Caco-2 (cell line): ENCODE measurements at regions of chr11 and their contacts with region 1.

Region 1: DNA sequence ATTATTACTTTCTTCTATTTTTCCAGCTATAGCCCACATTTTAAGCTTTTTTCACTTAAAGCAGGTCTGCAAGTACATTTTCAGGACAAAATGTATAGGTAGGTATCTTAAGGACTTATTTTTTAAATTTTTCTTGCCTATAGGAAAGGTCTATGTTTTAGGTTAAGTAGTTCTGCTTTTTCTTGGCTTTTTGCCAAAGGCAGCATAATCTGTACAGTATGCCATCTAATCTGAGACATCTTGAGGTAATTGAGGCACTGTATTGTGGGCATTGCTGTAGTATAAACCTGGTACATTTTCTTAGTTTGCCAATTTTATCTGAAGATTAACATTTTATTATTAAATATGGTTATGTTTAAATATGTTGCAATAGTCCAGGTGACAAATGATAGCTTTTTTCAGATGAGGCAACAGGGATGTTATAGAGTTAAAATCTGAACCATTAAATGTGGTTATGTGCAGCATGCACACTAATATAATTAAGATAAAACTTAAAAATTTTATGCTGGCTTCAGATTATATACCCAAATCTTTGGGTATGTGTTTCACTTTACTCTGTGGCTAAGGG is 42.9 kb downstream of the QSER1 start:
- DNase-seq: no peak
- H3K4me3 ChIP-seq: no peak overlapping the region
- H3K4me3 Mint-ChIP-seq: no peak overlapping the region
- H3K27ac Mint-ChIP-seq: no peak overlapping the region
- H3K4me1 ChIP-seq: peaks cover 32% of the 10 kb centered on the region
- H3K4me1 Mint-ChIP-seq: peaks cover 26% of the 10 kb centered on the region
- H3K27me3 ChIP-seq: no peaks in the 10 kb centered on the region
- H3K27me3 Mint-ChIP-seq: no peaks in the 10 kb centered on the region
- CTCF ChIP-seq: no peak

Region 2: GRCh38 chr11:32918427-32918826 is 17.1 kb before region 1 on chr11:
- CTCF ChIA-PET with region 1: no interaction called
- POLR2A ChIA-PET with region 1: no interaction called
- intact Hi-C with region 1: loop called (anchors 2 kb)
- DNase-seq: no peak
- H3K4me3 ChIP-seq: no peak overlapping the region
- H3K4me3 Mint-ChIP-seq: peak overlapping the region; percentile 33
- H3K27ac Mint-ChIP-seq: peak overlapping the region; percentile 78
- H3K4me1 ChIP-seq: peaks cover 34% of the 10 kb centered on the region
- H3K4me1 Mint-ChIP-seq: peaks cover 29% of the 10 kb centered on the region
- H3K27me3 ChIP-seq: no peaks in the 10 kb centered on the region
- H3K27me3 Mint-ChIP-seq: no peaks in the 10 kb centered on the region
- CTCF ChIP-seq: no peak

Region 3: DNA sequence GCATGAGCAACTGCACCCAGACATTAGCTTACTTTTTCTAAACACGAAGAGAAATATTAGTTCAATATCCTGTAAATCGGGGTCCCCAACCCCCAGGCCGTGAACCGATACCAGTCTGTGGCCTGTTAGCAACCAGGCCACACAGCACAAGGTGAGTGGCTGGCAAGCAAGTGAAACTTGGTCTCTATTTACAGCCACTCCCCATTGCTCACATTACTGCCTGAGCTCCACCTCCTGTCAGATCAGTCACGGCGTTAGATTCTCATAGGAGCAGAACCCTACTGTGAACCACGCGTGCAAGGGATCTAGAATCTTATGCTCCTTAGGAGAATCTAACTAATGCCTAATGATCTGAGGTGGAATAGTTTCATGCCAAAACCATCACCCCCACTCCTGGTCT is 52.3 kb after region 1 on chr11:
- CTCF ChIA-PET with region 1: no interaction called
- POLR2A ChIA-PET with region 1: no interaction called
- intact Hi-C with region 1: no loop called
- DNase-seq: no peak
- H3K4me3 ChIP-seq: no peak overlapping the region
- H3K4me3 Mint-ChIP-seq: no peak overlapping the region
- H3K27ac Mint-ChIP-seq: no peak overlapping the region
- H3K4me1 ChIP-seq: 0 out of 2 replicates have a peak, but pooled peaks cover 11% of the 10 kb centered on the region
- H3K4me1 Mint-ChIP-seq: peaks cover 7% of the 10 kb centered on the region
- H3K27me3 ChIP-seq: no peaks in the 10 kb centered on the region
- H3K27me3 Mint-ChIP-seq: no peaks in the 10 kb centered on the region
- CTCF ChIP-seq: no peak